ENCODE measurements at regions of chr1 and their contacts with region 1.

Region 1: DNA sequence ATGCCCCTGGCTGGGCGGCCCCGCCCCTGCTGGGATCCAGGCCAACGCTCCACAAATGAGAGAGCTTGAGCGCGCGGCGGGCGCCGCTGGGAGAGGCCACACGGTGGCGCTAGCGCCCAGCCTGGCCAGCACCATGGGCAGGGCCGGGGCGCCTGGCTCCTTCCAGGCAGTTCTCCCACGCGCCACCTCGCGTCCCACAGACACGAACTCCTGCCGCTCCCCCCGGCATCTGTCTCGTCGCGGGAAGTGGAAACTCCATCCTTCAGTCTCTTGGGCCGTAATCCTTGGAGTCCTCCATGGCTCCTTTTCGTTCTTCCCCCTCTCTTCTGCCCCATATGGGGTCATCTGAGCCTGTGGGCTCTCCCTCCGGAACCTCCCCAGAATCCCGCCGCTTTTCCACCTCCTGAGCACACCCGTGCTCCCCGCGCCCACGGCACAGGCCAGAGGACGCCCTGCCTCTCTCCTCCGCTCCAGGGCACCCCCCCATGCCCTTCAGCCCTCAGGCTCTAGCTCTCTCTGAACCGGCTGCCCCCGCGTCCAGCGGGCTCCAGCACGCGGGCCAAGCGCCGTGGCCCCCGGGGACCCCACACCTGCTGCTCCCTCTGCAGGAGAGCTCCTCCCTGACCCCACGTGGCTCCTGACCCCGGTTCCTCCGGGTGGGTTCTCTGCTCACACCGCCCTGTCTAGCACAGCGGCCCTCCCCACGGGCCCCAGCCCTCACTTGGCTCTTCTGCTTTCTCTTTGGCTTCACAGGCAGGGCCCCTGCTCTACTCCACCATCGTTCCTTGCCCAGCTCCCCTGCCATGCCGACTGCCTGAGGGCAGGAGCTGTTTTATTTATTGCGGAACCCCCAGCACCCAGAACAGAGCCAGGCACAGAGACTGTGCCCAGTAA is 31.9 kb upstream of the EDN2 start:
- H3K4me3 ChIP-seq: no peak overlapping the region
- H3K27ac ChIP-seq: no peak overlapping the region
- H3K4me1 ChIP-seq: no peaks in the 10 kb centered on the region
- CTCF ChIP-seq: peak; percentile 93

Region 2: DNA sequence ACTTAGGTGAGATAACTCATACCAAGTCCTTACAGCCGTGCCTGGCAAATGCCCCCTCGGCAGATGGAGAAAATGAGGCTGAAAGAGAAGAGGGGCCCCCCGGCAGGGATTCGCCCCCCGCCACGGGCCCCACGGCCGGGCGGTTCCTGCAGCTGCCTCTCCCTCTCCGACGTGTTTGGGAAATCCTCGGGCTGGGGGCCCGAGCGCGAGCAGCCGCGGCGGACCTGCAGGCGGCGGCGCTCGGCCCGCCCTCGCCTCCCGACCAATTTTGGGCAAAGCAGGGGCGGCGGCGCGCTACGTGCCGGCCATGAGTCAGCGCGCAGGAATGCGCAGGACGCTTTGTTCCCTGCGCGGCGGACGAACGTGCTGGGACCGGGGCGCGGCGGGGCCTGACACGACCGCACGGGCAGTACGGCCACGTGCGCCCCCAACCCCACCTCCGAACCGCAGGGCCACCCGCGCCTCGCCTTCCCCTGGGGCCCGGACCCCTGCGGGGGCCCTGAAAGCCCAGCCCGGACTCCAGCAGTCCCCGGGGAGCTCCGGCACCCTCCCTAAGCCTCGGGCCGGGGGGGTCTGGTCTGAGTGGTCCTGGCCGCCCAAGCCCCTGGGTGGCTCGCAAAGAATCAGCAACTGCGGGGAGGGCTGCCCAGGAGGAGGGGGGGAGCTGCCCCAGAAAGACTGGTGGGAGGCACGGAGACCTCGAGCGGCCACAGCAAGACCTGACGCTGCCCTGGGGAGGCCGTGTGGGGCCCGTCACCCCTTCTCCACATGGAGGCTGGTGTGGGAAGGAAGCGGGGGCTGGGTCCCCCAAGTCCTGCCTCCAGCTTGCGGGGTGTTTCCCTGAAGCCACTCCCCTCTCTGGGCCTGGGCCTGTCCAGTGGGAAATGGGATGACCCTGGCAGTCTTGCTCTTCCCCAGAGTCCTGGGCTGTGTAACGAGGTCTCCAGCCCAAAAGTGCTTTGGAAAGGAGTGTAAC is 20.0 kb before region 1 on chr1:
- CTCF ChIA-PET with region 1: interaction called, 23 read pairs
- POLR2A ChIA-PET with region 1: no interaction called
- H3K4me3 ChIP-seq: peak overlapping the region; percentile 14
- H3K27ac ChIP-seq: peak overlapping the region; percentile 58
- H3K4me1 ChIP-seq: peaks cover 2% of the 10 kb centered on the region
- CTCF ChIP-seq: no peak; the same call in 1 of the 2 replicates

Region 3: DNA sequence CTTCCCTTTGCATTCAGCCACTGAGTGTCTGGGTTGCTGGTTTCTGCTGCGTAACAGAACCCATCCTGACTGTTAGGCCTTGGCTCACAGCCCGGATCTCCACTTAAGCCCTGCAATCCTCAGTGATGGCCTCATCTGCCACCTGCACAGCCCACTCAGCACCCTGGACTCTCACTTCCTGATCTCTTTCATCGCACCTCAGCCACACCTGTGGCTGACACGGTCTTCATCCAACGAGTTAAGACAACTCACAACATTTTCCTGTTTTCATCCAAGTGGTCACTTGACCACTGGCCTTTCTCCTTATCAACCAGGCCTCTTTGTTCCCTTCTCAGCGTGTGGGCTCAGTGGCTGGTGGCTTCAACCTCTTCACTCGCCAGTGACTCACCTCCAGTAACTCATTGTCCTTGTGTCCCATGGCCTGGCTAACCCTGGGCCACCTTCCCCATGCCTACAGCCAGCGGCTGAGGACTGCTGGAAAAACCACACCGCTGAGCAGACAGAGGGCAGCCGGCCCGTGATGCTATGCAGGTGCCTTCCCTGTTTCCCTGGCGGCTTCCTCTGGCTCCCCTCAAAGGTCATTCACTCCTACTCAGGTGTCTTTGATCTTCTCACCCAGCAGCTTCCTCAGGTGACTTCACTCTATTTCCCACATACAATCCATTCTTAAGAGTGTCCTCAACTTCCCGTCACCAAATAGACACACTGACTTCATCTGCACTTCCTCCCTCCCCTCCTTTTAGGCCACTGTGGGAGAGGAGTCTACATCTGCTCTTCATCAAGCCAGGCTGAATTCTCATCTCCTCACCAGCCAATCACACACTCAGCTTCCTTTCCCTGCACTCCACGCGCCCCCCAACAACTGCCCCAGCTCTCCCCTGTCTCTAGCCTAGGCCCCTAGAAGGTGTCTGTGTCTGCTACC is 12.0 kb before region 1 on chr1:
- CTCF ChIA-PET with region 1: interaction called, 25 read pairs
- POLR2A ChIA-PET with region 1: no interaction called
- H3K4me3 ChIP-seq: no peak overlapping the region
- H3K27ac ChIP-seq: no peak overlapping the region
- H3K4me1 ChIP-seq: no peaks in the 10 kb centered on the region
- CTCF ChIP-seq: no peak

Region 4: DNA sequence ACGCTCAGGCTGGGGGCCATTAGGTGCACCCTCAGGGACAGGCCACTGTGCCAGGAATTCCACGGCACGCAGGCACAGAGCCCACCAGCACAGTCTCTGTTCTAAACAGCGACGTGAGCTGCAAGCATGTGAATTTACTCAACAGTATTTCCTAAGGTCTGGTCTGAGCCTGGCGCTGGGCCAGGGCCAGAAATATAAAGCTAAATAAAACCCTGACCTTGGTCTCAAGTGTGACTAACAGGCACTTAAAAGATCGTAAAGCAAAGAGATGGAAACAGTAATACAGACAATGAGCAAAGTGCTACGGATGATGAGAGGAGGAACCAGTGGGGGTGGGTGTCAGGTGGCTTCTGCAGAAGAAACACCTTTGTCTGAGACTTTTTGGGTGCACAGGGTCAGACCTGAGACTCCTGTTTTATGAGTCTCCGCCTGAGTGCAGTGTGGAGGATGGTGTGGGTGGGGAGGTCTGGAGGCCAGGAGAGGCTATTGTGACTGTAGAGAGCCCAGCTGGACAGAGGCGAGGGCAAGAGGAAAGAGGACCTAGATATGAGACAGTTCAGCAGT is 21.5 kb after region 1 on chr1:
- CTCF ChIA-PET with region 1: interaction called, 21 read pairs
- POLR2A ChIA-PET with region 1: interaction called, 3 read pairs
- H3K4me3 ChIP-seq: no peak overlapping the region
- H3K27ac ChIP-seq: no peak overlapping the region
- H3K4me1 ChIP-seq: peaks cover 14% of the 10 kb centered on the region
- CTCF ChIP-seq: no peak

Region 5: GRCh38 chr1:41573785-41574713 is 57.6 kb after region 1 on chr1:
- CTCF ChIA-PET with region 1: interaction called, 12 read pairs
- POLR2A ChIA-PET with region 1: no interaction called
- H3K4me3 ChIP-seq: no peak overlapping the region
- H3K27ac ChIP-seq: no peak overlapping the region
- H3K4me1 ChIP-seq: no peaks in the 10 kb centered on the region
- CTCF ChIP-seq: peak; percentile 92

Measured in HEK293 (cell line).